CD4-positive, alpha-beta memory T cell (primary cell): ENCODE measurements at regions of chr19 and their contacts with region 1.

Region 1: DNA sequence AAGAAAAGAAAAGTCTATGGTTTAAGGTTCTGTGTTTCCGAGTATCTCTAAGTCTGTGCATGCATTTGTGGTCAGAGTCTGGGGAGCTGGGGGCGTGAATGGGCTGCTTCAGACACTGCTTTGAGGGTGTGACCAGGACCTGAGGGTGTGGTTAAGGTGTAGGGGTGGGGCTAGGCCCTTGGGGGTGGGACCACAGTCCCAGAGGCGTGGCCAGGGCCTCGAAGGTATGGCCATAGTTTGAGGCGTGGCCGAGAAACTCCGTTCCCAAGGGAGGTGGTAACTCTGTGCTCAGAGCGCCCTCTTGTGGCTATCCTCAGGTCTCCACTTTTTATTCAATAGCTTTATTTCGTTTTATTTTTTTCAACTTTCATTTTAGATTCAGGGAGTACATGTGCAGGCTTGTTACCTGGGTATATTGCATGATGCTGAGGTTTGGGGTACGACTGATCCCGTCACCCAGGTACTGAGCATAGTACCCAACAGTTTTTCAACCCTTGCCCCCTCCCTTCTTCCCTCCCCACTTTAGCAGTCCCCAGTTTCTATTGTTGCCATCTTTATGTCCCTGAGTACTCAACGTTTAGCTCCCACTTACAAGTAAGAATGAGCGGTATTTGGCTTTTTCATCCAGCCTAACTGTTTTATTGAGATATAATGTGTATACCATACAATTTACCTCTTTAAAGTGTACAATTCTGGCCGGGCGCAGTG is 7.0 kb upstream of the CBLC start:
- DNase-seq: peak; percentile 95 to 99 (median 97)
- H3K4me3 ChIP-seq: no peak overlapping the region
- H3K4me3 Mint-ChIP-seq: peak overlapping the region; percentile 49 to 79 (median 70)
- H3K27ac ChIP-seq: no peak overlapping the region
- H3K27ac Mint-ChIP-seq: peak overlapping the region; percentile 79 to 97 (median 93)
- H3K4me1 ChIP-seq: peaks cover 23% of the 10 kb centered on the region
- H3K4me1 Mint-ChIP-seq: peaks cover 16 to 32% (median 28%) of the 10 kb centered on the region in 4 donors
- H3K27me3 ChIP-seq: no peaks in the 10 kb centered on the region
- H3K27me3 Mint-ChIP-seq: no peaks in the 10 kb centered on the region

Region 2: DNA sequence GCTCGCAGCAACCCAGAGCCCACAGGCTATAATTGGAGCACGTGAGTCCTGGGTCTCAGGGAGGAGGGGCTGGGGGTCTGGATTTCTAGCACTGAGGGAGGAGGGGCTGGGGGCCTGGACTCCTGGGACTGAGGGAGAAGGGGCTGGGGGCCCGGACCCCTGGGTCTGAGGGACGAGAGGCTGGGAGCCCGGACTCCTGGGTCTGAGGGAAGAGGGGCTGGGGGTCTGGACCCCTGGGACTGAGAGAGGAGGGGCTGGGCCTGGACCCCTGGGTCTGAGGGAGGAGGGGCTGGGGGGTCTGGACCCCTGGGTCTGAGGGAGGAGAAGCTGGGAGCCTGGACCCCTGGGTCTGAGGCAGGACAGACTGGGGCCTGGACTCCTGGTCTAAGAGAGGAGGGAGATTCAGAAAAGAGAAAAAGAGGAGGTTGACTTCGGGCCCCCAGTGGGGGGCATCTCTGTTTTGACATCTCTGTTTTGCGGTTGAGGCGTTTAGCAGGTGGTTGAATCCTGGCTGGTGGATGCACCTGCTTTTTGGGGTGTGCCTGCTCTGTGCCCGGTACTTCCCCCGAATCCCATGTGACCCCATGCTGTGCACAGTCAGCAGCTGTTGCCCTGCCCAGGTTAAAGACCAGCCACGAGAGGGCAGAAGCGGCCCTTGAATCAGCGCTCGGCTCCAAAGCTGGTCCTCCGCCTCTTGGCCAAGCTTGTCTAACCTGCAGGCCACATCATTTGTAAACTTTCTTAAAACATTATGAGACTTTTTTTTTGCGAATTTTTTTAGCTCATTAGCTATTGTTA is 116.5 kb before region 1 on chr19:
- CTCF ChIA-PET with region 1: interaction called, 25 read pairs
- POLR2A ChIA-PET with region 1: no interaction called
- intact Hi-C with region 1: loop called (anchors 1 kb)
- DNase-seq: peak; percentile 50 to 74 (median 64)
- H3K4me3 ChIP-seq: no peak overlapping the region
- H3K4me3 Mint-ChIP-seq: no peak overlapping the region
- H3K27ac ChIP-seq: no peak overlapping the region
- H3K27ac Mint-ChIP-seq: peak overlapping the region in 2 of 7 donors; percentile 41 to 50
- H3K4me1 ChIP-seq: peaks cover 5% of the 10 kb centered on the region
- H3K4me1 Mint-ChIP-seq: peaks cover 1 to 13% (median 8%) of the 10 kb centered on the region in 4 donors
- H3K27me3 ChIP-seq: no peaks in the 10 kb centered on the region
- H3K27me3 Mint-ChIP-seq: peaks cover 1 to 5% of the 10 kb centered on the region in 2 donors

Region 3: DNA sequence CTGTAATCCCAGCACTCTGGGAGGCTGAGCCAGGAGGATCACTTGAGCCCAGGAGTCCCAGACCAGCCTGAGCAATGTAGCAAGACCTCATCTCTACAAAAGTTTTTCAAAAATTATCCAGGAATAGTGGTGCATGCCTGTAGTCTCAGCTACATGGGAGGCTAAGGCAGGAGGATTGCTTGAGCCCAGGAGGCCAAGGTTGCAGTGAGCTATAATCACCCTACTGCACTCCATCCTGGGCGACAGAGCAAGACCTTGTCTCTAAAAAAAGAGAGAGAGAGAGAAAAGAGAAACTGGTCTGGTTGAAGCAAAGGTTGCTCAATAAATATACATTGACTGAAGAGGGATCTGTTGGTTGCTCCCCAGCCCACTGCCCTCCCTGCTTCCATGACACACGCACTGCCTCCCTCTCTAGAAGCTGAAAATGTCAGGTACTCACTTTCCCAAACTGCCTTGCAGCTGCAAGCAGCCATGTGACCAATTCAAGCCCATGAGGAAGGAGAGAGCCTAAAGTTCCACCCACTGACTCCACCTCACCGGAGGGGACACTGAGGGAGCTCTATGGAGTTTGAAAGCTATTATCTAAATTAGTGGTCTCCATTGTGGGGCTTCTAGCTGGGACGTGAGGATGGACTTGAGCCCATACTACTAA is 57.7 kb before region 1 on chr19:
- CTCF ChIA-PET with region 1: interaction called, 11 read pairs
- POLR2A ChIA-PET with region 1: interaction called, 3 read pairs
- intact Hi-C with region 1: no loop called
- DNase-seq: no peak
- H3K4me3 ChIP-seq: no peak overlapping the region
- H3K4me3 Mint-ChIP-seq: no peak overlapping the region
- H3K27ac ChIP-seq: no peak overlapping the region
- H3K27ac Mint-ChIP-seq: peak overlapping the region in 1 of 7 donors; percentile 11
- H3K4me1 ChIP-seq: no peaks in the 10 kb centered on the region
- H3K4me1 Mint-ChIP-seq: no peaks in the 10 kb centered on the region
- H3K27me3 ChIP-seq: no peaks in the 10 kb centered on the region
- H3K27me3 Mint-ChIP-seq: no peaks in the 10 kb centered on the region

Region 4: GRCh38 chr19:44746946-44747738 is 23.6 kb before region 1 on chr19:
- CTCF ChIA-PET with region 1: interaction called, 16 read pairs
- POLR2A ChIA-PET with region 1: interaction called, 3 read pairs
- intact Hi-C with region 1: loop called (anchors 1 kb)
- DNase-seq: peak; percentile 81 to 95 (median 86)
- H3K4me3 ChIP-seq: peak overlapping the region; percentile 66
- H3K4me3 Mint-ChIP-seq: peak overlapping the region; percentile 89 to 99 (median 96)
- H3K27ac ChIP-seq: peak overlapping the region; percentile 98
- H3K27ac Mint-ChIP-seq: peak overlapping the region; percentile 85 to 100 (median 97)
- H3K4me1 ChIP-seq: peaks cover 44% of the 10 kb centered on the region
- H3K4me1 Mint-ChIP-seq: peaks cover 30 to 67% (median 45%) of the 10 kb centered on the region in 4 donors
- H3K27me3 ChIP-seq: no peaks in the 10 kb centered on the region
- H3K27me3 Mint-ChIP-seq: no peaks in the 10 kb centered on the region

Region 5: DNA sequence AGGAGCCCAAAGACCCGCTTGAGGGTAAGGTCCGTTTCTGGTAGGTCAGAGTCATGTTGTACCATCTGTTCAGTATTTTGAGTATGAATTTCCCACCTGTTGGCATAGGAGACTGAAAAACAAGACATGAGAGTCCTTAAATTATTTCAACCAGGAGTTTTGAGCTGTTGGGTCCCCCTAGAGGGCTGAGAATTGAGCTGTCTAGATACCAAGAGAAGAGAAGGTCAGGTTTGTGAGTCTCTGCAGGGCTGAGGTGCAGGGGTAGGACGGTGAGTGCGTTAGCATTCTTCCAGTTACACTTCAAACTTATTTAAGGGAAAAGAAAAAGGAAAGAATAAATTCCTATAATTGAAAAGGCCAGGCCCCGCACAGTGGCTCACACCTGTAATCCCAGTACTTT is 12.0 kb after region 1 on chr19:
- CTCF ChIA-PET with region 1: interaction called, 26 read pairs
- POLR2A ChIA-PET with region 1: no interaction called
- intact Hi-C with region 1: no loop called
- DNase-seq: no peak
- H3K4me3 ChIP-seq: no peak overlapping the region
- H3K4me3 Mint-ChIP-seq: no peak overlapping the region
- H3K27ac ChIP-seq: no peak overlapping the region
- H3K27ac Mint-ChIP-seq: no peak overlapping the region
- H3K4me1 ChIP-seq: peaks cover 3% of the 10 kb centered on the region
- H3K4me1 Mint-ChIP-seq: peaks cover 4 to 7% (median 6%) of the 10 kb centered on the region in 4 donors
- H3K27me3 ChIP-seq: no peaks in the 10 kb centered on the region
- H3K27me3 Mint-ChIP-seq: peaks cover 0 to 7% of the 10 kb centered on the region in 2 donors

Region 6: GRCh38 chr19:44820648-44821609 is 50.2 kb after region 1 on chr19:
- CTCF ChIA-PET with region 1: no interaction called
- POLR2A ChIA-PET with region 1: no interaction called
- intact Hi-C with region 1: no loop called
- DNase-seq: no peak
- H3K4me3 ChIP-seq: no peak overlapping the region
- H3K4me3 Mint-ChIP-seq: no peak overlapping the region
- H3K27ac ChIP-seq: no peak overlapping the region
- H3K27ac Mint-ChIP-seq: no peak overlapping the region
- H3K4me1 ChIP-seq: no peaks in the 10 kb centered on the region
- H3K4me1 Mint-ChIP-seq: no peaks in the 10 kb centered on the region
- H3K27me3 ChIP-seq: no peaks in the 10 kb centered on the region
- H3K27me3 Mint-ChIP-seq: peaks cover 0 to 3% of the 10 kb centered on the region in 2 donors